HEK293 (cell line): ENCODE measurements at regions of chr22 and their contacts with region 1.

Region 1: DNA sequence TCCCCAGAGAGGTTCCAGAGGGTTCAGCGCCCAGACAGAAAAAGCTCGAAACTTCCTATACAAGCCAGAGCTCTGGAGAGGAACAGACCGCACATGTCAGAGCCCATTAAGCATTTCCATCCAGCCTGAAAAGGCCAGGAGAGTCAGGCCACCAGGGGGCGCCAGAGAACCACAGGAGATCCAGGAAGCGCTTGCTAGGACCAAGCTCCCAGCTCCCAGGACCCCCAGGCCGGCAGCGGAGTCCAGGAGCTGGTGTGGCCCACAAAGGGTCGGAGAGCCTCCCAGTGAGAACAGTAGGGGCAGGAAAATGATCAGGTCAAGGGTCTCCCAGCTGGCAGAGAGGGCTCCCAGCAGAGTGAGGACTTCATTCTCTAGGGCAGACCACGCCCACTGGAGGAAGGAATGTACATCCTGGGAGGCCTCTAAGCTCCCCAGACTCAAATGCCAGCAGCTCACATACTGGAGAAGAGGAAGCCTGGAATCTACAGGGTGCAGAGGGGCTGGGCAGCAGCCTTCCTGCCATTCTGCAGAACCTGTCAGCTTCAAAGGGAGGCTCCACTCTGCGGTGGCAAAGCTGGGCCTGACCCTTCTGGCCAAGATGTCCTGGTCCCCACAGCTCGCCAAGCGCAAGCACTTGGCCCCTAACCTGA is 2.1 kb upstream of the MEI1 start:
- H3K4me3 ChIP-seq: no peak overlapping the region
- H3K27ac ChIP-seq: no peak overlapping the region
- H3K4me1 ChIP-seq: no peaks in the 10 kb centered on the region
- CTCF ChIP-seq: peak; percentile 94

Region 2: GRCh38 chr22:41280066-41280465 is 417.2 kb before region 1 on chr22:
- CTCF ChIA-PET with region 1: no interaction called
- POLR2A ChIA-PET with region 1: no interaction called
- H3K4me3 ChIP-seq: no peak overlapping the region
- H3K27ac ChIP-seq: peak overlapping the region; percentile 49; the same call in 1 of the 2 replicates
- H3K4me1 ChIP-seq: 0 out of 2 replicates have a peak, but pooled peaks cover 3% of the 10 kb centered on the region
- CTCF ChIP-seq: no peak

Region 3: GRCh38 chr22:41713004-41713403 is 15.8 kb after region 1 on chr22:
- CTCF ChIA-PET with region 1: interaction called, 43 read pairs
- POLR2A ChIA-PET with region 1: no interaction called
- H3K4me3 ChIP-seq: no peak overlapping the region
- H3K27ac ChIP-seq: no peak overlapping the region
- H3K4me1 ChIP-seq: 0 out of 2 replicates have a peak, but pooled peaks cover 2% of the 10 kb centered on the region
- CTCF ChIP-seq: no peak

Region 4: GRCh38 chr22:41746567-41747400 is 49.5 kb after region 1 on chr22:
- CTCF ChIA-PET with region 1: interaction called, 72 read pairs
- POLR2A ChIA-PET with region 1: interaction called, 4 read pairs
- H3K4me3 ChIP-seq: no peak overlapping the region
- H3K27ac ChIP-seq: no peak overlapping the region
- H3K4me1 ChIP-seq: no peaks in the 10 kb centered on the region
- CTCF ChIP-seq: peak; percentile 55

Region 5: GRCh38 chr22:41800348-41801146 is 103.3 kb after region 1 on chr22 and contains the start of gene CCDC134:
- CTCF ChIA-PET with region 1: interaction called, 44 read pairs
- POLR2A ChIA-PET with region 1: interaction called, 20 read pairs
- H3K4me3 ChIP-seq: peak within 1 kb of the TSS; percentile 75
- H3K27ac ChIP-seq: peak within 1 kb of the TSS; percentile 82
- H3K4me1 ChIP-seq: no peaks in the 10 kb centered on the region; the same call in 1 of the 2 replicates
- CTCF ChIP-seq: peak; percentile 12; the same call in 1 of the 2 replicates

Region 6: DNA sequence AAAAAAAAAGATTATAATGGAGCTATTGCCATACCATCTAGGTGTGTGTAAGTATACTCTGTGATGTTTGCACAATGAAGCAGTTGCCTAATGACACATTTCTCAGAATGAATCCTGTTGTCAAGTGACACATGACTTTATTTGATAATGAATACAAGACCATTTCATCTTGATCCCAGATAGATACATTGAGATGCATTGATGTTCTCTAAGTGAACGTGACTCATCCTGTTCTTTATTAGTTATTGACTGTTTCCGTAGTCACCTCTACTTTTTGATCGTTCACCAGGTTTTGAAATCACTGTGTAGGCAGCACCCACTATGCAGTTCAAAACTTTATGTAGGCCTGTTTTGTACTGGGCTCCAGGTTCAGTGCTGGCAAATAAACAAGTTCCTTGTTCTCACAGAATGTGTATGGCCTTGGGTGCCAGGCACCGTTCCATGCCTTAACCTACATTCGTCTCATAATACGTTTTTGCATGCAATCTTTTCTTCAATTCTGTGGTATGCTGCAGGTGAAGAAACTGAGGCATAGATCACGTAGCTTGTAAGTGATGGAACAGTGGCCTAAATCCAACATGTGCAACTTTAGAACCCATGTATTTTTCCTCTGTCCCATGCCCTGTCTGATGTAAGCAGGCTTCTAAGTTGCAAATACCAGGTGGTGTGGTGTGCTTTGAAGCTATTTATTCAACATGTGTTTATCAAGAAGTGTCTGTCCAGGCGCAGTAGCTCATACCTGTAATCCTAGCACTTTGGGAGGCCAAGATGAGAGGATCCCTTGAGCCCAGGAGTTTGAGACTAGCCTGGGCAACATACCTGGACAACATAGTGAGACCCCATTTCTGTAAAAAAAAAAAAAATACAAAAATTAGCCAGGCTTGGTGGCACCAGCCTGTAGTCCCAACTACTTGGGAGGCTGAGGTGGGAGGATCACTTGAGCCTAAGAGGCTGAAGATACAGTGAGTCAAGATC is 146.0 kb after region 1 on chr22:
- CTCF ChIA-PET with region 1: interaction called, 16 read pairs
- POLR2A ChIA-PET with region 1: no interaction called
- H3K4me3 ChIP-seq: no peak overlapping the region
- H3K27ac ChIP-seq: no peak overlapping the region
- H3K4me1 ChIP-seq: peaks cover 23% of the 10 kb centered on the region
- CTCF ChIP-seq: no peak

Region 7: DNA sequence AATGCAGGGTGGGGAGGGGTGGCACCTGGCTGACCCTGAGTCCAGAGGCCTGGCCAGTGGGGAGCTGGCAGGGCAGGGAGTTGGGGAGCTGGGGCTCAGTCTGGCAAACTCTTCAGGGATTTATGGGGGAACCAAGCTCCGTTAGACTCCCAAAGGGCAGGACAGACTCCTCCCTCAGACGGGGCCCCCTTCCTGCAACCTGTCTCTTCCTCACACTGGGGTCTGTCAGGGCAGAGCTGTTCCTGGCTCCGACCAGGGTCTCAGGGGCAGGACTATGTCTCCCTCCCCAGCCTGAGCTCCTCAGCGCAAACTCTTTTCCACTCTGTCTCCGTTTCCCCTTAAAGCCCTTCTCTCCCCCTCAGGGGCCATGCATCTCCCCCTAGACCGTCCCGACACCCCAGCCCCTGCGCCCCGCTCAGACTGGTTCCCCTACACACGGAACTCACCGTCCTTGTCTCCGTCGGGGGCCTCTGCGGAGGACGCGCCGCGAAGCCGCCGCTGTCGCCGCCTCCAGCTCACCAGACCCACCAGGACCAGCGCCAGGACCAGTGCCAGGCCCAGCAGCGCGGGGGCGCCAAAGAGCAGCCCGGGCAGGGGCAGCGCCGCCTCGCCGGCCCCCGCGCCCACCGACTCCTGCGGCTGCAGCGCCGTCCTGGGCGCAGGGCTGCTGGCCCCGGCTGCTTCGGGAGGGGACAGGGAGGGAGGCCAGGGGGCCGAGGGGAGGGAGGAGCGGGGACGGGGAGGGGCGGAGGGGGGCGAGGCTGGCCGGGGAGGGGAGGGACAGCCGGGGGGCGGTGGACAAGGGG is 228.6 kb after region 1 on chr22:
- CTCF ChIA-PET with region 1: interaction called, 8 read pairs
- POLR2A ChIA-PET with region 1: interaction called, 13 read pairs
- H3K4me3 ChIP-seq: peak overlapping the region; percentile 1
- H3K27ac ChIP-seq: no peak overlapping the region; the same call in 1 of the 2 replicates
- H3K4me1 ChIP-seq: peaks cover 2% of the 10 kb centered on the region; the same call in 1 of the 2 replicates
- CTCF ChIP-seq: peak; percentile 60; the same call in 1 of the 2 replicates